Naive thymus-derived CD4-positive, alpha-beta T cell (primary cell): ENCODE measurements at regions of chr5 and their contacts with region 1.

Region 1: GRCh38 chr5:78984439-78985115 is 533 bp downstream of the ARSB start:
- DNase-seq: peak; percentile 62 to 87 (median 67)
- ATAC-seq: peak; percentile 81
- H3K4me3 ChIP-seq: peak overlapping the region; percentile 79
- H3K4me3 Mint-ChIP-seq: peak overlapping the region; percentile 87 to 98 (median 92)
- H3K27ac ChIP-seq: peak overlapping the region; percentile 76
- H3K27ac Mint-ChIP-seq: peak overlapping the region; percentile 75 to 98 (median 91)
- H3K4me1 ChIP-seq: peaks cover 5 to 13% of the 10 kb centered on the region in 2 donors
- H3K4me1 Mint-ChIP-seq: peaks cover 15 to 30% (median 26%) of the 10 kb centered on the region in 7 donors
- H3K27me3 ChIP-seq: no peaks in the 10 kb centered on the region
- H3K27me3 Mint-ChIP-seq: no peaks in the 10 kb centered on the region

Region 2: DNA sequence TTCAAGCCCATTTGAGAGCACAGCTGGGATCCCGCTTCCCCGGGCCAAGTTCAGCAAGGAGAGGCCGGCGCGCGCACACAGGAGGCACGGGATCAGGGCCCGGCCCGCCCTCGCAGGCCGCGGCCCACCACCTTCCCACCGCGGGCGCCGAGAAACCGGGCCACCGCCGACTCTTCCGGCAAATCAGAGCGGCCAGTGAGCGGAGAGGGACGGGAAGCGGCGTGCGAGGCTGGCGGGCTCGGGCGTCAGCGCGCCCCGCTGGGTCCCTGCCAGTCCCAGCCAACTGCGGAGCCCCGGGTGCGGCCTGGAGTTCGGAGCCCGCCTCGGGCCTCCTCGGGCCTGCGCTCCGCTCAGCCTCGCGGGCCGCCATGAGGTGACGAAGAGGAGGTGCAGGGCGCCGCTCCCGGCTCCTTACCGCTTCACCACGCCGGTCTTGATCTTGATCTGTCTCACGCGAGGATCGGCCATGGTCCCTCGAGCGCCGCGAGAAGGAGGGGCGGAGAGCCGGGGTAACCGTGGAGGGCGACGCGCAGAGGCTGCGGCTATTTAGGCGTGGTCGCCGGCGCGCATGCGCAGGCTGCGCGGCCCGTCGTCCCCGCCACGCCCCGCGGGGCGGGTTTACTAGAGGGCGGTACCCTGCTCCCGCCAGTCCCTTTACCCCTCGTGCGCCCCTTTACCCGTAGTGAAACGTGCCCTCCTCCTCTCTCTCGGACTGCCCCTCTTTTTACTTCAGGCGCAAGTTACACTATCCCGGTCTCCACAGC is 1208.6 kb before region 1 on chr5 and contains the start of gene TBCA:
- CTCF ChIA-PET with region 1: no interaction called
- POLR2A ChIA-PET with region 1: no interaction called
- intact Hi-C with region 1: loop called in 1 of 2 experiments (anchors 10 kb)
- DNase-seq: peak; percentile 87 to 94 (median 93)
- ATAC-seq: peak; percentile 92
- H3K4me3 ChIP-seq: peak within 1 kb of the TSS; percentile 72
- H3K4me3 Mint-ChIP-seq: peak within 1 kb of the TSS; percentile 90 to 99 (median 94)
- H3K27ac ChIP-seq: peak within 1 kb of the TSS; percentile 97
- H3K27ac Mint-ChIP-seq: peak within 1 kb of the TSS; percentile 96 to 98 (median 97)
- H3K4me1 ChIP-seq: peaks cover 13 to 26% of the 10 kb centered on the region in 2 donors
- H3K4me1 Mint-ChIP-seq: peaks cover 32 to 60% (median 49%) of the 10 kb centered on the region in 7 donors
- H3K27me3 ChIP-seq: no peaks in the 10 kb centered on the region
- H3K27me3 Mint-ChIP-seq: no peaks in the 10 kb centered on the region
- total RNA-seq, gene TBCA: 71.3 to 137 (median 89.3) TPM

Region 3: DNA sequence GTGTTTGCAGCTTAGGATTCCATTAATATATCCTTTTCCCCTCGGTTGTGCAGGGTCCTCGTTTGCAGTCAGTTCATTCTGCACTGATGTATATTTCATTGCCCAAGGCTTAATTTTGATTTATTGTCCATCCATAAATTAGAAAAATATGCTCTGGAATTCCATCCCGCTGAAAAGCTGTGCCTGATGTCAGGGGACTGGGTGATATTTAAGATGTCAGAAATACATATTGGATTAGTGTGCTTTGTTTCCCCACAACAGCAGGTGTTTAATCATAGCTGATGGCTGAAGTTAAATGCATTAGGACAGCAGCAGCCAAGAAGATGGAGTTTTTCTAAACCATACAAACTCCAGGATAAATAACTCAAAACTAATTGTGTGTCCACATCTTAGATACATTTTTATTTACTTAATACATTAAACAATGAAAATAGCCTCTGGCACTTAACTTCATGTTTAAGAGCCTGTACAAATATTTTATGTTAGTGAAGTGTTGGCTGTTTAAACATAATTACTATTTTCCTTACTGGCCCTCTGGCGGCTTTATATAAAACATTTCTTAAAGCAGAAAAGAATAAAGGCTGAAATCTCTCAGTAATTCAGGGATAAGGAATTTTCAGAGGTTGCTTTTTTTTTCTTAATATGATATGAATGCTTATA is 1038.1 kb before region 1 on chr5:
- CTCF ChIA-PET with region 1: no interaction called
- POLR2A ChIA-PET with region 1: no interaction called
- intact Hi-C with region 1: no loop called
- DNase-seq: no peak
- ATAC-seq: no peak
- H3K4me3 ChIP-seq: no peak overlapping the region
- H3K4me3 Mint-ChIP-seq: no peak overlapping the region
- H3K27ac ChIP-seq: no peak overlapping the region
- H3K27ac Mint-ChIP-seq: no peak overlapping the region
- H3K4me1 ChIP-seq: no peaks in the 10 kb centered on the region
- H3K4me1 Mint-ChIP-seq: no peaks in the 10 kb centered on the region
- H3K27me3 ChIP-seq: no peaks in the 10 kb centered on the region
- H3K27me3 Mint-ChIP-seq: peaks cover 19 to 40% (median 29%) of the 10 kb centered on the region in 5 donors

Region 4: DNA sequence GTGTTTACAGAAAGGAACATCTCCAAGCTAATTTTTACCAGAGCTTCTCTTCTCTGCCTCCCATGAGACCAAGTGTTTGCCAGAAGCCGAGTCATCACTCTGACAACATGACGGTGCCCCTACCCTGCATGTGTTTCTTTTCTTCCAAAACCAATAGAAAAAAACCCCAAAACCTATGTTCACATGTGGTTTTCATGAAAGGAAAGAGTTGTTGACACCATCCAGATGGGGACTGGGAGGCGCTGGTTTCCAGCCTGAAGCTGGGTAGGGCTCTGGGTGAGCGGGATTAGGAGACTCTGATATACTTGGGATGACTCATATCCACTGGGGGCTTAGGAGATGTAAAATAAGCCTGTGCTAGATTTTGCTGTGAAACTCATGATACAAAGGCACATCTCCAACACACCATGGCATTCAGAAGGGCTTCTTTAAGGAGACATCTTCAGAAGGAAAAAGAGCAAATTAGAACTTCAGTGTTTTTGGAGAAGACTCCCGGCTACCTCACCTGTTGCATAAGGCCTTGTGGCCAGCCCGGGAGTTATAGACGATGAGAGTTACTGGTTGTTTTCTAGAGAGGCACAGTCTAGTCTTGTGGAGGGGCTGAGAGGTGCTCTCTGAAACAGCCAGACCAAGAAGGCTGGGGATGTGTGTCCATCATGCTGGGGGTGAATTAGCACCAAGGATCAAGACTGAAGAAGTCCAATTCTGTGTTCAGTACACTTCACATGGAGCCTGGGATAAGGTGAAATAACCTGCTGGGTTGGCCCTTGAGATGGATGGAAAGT is 227.1 kb before region 1 on chr5:
- CTCF ChIA-PET with region 1: no interaction called
- POLR2A ChIA-PET with region 1: no interaction called
- intact Hi-C with region 1: no loop called
- DNase-seq: no peak
- ATAC-seq: no peak
- H3K4me3 ChIP-seq: no peak overlapping the region
- H3K4me3 Mint-ChIP-seq: no peak overlapping the region
- H3K27ac ChIP-seq: no peak overlapping the region
- H3K27ac Mint-ChIP-seq: peak overlapping the region in 1 of 9 donors; percentile 34
- H3K4me1 ChIP-seq: no peaks in the 10 kb centered on the region
- H3K4me1 Mint-ChIP-seq: peaks cover 0 to 23% (median 0%) of the 10 kb centered on the region in 7 donors
- H3K27me3 ChIP-seq: no peaks in the 10 kb centered on the region
- H3K27me3 Mint-ChIP-seq: peaks cover 0 to 6% (median 0%) of the 10 kb centered on the region in 5 donors

Region 5: GRCh38 chr5:78886341-78887230 is 98.0 kb before region 1 on chr5:
- CTCF ChIA-PET with region 1: no interaction called
- POLR2A ChIA-PET with region 1: no interaction called
- intact Hi-C with region 1: loop called in 1 of 2 experiments (anchors 2 kb)
- DNase-seq: peak in 2 of 9 donors; percentile 6 to 7
- ATAC-seq: no peak
- H3K4me3 ChIP-seq: no peak overlapping the region
- H3K4me3 Mint-ChIP-seq: no peak overlapping the region
- H3K27ac ChIP-seq: no peak overlapping the region
- H3K27ac Mint-ChIP-seq: no peak overlapping the region
- H3K4me1 ChIP-seq: peaks cover 0 to 6% of the 10 kb centered on the region in 2 donors
- H3K4me1 Mint-ChIP-seq: peaks cover 3 to 21% (median 19%) of the 10 kb centered on the region in 7 donors
- H3K27me3 ChIP-seq: no peaks in the 10 kb centered on the region
- H3K27me3 Mint-ChIP-seq: no peaks in the 10 kb centered on the region

Region 6: DNA sequence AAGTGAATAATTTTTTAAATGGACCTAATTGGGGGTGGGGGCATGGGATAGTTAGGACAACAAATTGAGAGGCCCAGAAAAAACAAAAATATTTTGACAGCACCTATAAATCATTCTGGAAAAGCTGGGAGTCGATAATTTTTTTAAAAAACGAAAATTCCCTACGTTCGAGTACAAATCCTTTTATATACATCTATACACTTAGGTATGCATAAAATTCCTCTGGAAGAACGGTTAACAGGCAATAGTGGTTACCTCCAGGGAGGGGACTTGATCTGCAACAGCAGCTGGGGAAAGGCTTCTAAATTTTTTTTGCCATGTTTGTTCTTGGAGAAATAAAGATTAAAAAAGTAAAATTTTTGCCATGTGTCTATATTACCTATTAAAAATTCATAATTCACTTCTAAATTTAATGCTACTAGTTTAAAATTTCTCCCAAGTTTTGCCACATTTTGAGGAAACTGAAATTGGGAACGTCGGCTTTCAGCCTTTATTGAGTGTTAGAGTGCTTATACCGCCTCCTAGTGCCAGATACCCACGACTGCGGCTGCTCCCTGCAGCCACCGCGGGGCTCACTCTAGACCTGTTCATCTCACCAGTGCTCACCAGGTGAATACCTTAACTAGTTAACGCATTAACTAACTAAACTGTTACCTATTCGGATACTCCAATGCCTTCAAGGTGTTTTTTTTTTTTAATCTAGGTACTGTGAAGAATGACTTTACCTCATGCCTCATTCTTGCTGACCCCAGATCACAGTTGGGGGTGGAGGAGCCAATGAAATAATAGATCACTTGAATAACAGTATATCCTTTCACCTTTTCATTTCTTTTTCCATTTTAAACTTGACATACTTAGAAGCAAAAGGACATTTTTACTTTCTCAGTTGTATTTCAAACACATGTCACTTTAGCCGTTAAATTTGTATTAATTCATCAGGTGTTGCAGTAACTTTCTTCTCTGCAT is 125.2 kb after region 1 on chr5:
- CTCF ChIA-PET with region 1: no interaction called
- POLR2A ChIA-PET with region 1: no interaction called
- intact Hi-C with region 1: loop called in 1 of 2 experiments (anchors 1 kb)
- DNase-seq: peak in 3 of 9 donors; percentile 13 to 29 (median 27)
- ATAC-seq: peak; percentile 75
- H3K4me3 ChIP-seq: no peak overlapping the region
- H3K4me3 Mint-ChIP-seq: no peak overlapping the region
- H3K27ac ChIP-seq: no peak overlapping the region
- H3K27ac Mint-ChIP-seq: no peak overlapping the region
- H3K4me1 ChIP-seq: no peaks in the 10 kb centered on the region
- H3K4me1 Mint-ChIP-seq: peaks cover 0 to 8% (median 0%) of the 10 kb centered on the region in 7 donors
- H3K27me3 ChIP-seq: peaks cover 0 to 8% of the 10 kb centered on the region in 2 donors
- H3K27me3 Mint-ChIP-seq: peaks cover 53 to 80% (median 59%) of the 10 kb centered on the region in 5 donors

Region 7: DNA sequence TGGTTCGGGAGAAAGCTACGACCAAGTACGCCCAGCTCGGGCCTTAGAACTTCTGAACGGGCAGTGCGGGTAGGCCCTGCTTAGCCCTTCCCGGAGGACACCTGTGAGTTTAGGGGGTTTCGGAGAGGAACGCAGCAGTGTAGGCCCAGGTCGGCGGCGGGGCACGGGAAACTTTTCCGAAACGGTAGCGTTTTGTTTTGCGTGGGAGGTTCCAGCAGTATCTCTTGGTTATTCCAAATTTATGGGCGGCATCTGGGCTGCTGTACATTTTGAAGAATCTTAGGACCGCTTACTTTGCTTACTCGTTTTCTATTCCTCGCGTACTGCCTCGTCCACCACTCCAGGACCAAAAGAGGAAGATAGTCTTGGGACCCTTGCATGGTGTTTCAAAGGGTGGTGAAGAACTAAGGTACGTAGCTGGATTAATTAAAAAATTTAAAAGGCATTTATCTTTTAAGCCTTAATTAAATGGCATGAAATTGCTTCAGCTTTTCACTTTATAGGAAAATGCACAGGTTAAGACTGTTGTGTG is 628.2 kb after region 1 on chr5:
- CTCF ChIA-PET with region 1: no interaction called
- POLR2A ChIA-PET with region 1: no interaction called
- intact Hi-C with region 1: loop called (anchors 2 to 5 kb)
- DNase-seq: no peak
- ATAC-seq: no peak
- H3K4me3 ChIP-seq: peak overlapping the region; percentile 84
- H3K4me3 Mint-ChIP-seq: peak overlapping the region; percentile 95 to 100 (median 97)
- H3K27ac ChIP-seq: peak overlapping the region; percentile 90
- H3K27ac Mint-ChIP-seq: peak overlapping the region; percentile 91 to 99 (median 98)
- H3K4me1 ChIP-seq: peaks cover 14 to 18% of the 10 kb centered on the region in 2 donors
- H3K4me1 Mint-ChIP-seq: peaks cover 25 to 58% (median 44%) of the 10 kb centered on the region in 7 donors
- H3K27me3 ChIP-seq: no peaks in the 10 kb centered on the region
- H3K27me3 Mint-ChIP-seq: peaks cover 0 to 6% (median 2%) of the 10 kb centered on the region in 5 donors